Cardiac septum (tissue), 1 donor: ENCODE measurements at regions of chr18 and their contacts with region 1.

Region 1: GRCh38 chr18:47453038-47453700 is 201.7 kb upstream of the SKOR2 start:
- DNase-seq: no peak

Region 2: GRCh38 chr18:47397671-47398319 is 55.4 kb before region 1 on chr18:
- intact Hi-C with region 1: loop called (anchors 10 kb)
- DNase-seq: no peak